Activated CD4-positive, alpha-beta T cell treated with anti-CD3 and anti-CD28 coated beads for 36 hours (primary cell): ENCODE measurements at regions of chr5 and their contacts with region 1.

Region 1: DNA sequence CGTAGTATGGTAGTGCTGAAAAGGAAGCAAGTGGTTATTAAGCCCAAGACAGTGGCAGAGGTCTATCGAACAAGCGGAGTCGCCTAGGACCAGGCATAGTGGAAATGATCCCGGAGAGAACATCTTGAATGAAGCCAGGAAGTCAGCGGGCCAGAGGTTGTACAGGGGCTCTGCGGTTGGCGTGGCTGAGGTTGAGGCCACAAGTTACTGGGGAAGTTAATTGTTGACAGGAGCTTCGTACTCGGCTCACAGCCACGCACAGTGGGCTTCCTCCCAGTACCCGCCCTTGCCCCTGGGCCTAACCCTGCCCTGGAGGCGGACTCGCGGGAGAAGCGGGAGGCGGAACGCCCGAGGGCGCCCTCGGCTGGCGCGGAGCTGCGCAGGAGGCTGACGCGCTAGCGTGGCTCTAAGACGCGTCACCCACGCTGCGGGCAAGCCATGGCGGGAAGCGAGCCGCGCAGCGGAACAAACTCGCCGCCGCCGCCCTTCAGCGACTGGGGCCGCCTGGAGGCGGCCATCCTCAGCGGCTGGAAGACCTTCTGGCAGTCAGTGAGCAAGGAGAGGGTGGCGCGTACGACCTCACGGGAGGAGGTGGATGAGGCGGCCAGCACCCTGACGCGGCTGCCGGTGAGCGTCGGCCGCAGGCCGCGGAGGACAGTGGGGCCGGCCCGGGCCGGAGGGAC is at the start of gene FBXO4:
- DNase-seq: peak; percentile 94
- ATAC-seq: peak; percentile 98
- H3K4me3 Mint-ChIP-seq: peak within 1 kb of the TSS; percentile 85
- H3K27ac Mint-ChIP-seq: peak within 1 kb of the TSS; percentile 99
- H3K4me1 Mint-ChIP-seq: peaks cover 24% of the 10 kb centered on the region
- H3K27me3 Mint-ChIP-seq: no peaks in the 10 kb centered on the region
- total RNA-seq, gene FBXO4: 18.8 to 22.3 TPM

Region 2: DNA sequence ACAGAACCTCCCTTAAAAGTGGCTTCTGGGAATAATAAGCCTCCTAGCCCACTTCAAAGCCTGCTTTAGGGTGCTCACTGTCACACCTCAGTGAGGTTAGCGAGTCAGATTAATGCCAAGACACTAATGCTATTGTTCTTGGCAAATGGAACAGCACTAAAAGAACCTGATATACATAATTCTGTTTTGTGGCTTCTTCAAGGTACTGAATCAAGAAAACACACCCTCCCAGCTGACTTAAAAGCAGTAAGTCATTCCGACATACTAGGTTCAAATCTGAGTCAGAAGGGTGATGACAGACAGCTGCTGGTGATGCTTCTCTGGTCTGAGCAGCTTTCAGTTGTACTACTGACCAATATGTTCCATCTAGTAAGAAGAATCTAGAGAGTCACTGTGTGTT is 176.4 kb before region 1 on chr5:
- CTCF ChIA-PET with region 1: no interaction called
- POLR2A ChIA-PET with region 1: no interaction called
- intact Hi-C with region 1: loop called in 1 of 2 experiments (anchors 5 kb)
- DNase-seq: peak; percentile 59
- ATAC-seq: peak; percentile 94
- H3K4me3 Mint-ChIP-seq: no peak overlapping the region
- H3K27ac Mint-ChIP-seq: no peak overlapping the region
- H3K4me1 Mint-ChIP-seq: peaks cover 28% of the 10 kb centered on the region
- H3K27me3 Mint-ChIP-seq: no peaks in the 10 kb centered on the region

Region 3: DNA sequence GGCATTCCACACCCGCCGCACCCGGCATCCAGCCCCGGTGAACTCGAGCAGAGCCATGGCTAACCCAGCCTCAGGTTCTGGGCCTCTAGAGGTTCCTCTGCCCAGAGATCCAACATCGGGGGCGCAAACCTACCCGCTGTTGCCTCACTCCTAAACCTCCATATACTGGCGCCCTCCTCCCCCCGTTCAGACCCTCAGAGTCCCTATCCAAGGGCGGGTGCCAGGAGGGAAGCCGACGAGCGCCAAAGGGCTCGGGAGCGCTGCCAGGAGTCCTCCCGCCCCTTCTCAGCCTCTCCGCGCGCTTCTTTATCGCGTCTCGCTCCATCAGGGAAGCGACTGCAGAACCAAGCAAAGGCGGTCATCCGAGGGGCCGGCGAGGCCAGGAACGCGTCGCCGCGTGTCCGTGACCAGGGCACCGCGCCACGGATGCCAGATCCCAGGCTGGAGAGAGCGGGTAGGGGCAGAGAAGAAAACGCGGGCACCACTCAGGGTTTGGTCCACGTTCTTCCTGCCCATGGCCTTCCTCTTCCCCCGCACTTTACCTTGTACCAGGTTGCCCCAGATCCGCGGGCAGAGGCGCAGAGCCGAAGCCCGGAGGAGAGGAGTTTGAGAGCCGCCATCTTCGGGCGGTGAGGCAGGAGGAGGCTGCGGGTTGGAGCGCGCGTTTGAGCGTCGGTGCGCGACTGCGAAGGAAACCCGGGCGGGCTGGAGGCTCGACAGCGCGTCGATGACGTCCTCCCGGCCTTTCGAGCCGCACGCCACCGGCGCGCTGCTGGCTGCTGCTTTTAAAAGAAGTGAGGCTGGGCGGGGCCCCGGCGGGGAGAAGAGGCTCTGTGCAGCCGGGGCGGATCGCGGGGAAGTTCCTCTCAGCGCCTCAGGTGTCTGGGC is 55.0 kb before region 1 on chr5 and contains the start of gene OXCT1:
- CTCF ChIA-PET with region 1: interaction called, 7 read pairs
- POLR2A ChIA-PET with region 1: interaction called, 3 read pairs
- intact Hi-C with region 1: loop called (anchors 1 kb)
- DNase-seq: peak; percentile 96
- ATAC-seq: peak; percentile 92
- H3K4me3 Mint-ChIP-seq: peak within 1 kb of the TSS; percentile 91
- H3K27ac Mint-ChIP-seq: peak within 1 kb of the TSS; percentile 94
- H3K4me1 Mint-ChIP-seq: peaks cover 54% of the 10 kb centered on the region
- H3K27me3 Mint-ChIP-seq: no peaks in the 10 kb centered on the region
- total RNA-seq, gene OXCT1: 70.3 to 91.4 TPM

Region 4: GRCh38 chr5:41903892-41904799 is 20.9 kb before region 1 on chr5 and contains the start of gene RIMOC1:
- CTCF ChIA-PET with region 1: interaction called, 7 read pairs
- POLR2A ChIA-PET with region 1: interaction called, 22 read pairs
- intact Hi-C with region 1: loop called (anchors 1 kb)
- DNase-seq: peak; percentile 98
- ATAC-seq: peak; percentile 97
- H3K4me3 Mint-ChIP-seq: peak within 1 kb of the TSS; percentile 91
- H3K27ac Mint-ChIP-seq: peak within 1 kb of the TSS; percentile 98
- H3K4me1 Mint-ChIP-seq: peaks cover 47% of the 10 kb centered on the region
- H3K27me3 Mint-ChIP-seq: no peaks in the 10 kb centered on the region
- total RNA-seq, gene RIMOC1: 25.4 to 26.7 TPM

Region 5: DNA sequence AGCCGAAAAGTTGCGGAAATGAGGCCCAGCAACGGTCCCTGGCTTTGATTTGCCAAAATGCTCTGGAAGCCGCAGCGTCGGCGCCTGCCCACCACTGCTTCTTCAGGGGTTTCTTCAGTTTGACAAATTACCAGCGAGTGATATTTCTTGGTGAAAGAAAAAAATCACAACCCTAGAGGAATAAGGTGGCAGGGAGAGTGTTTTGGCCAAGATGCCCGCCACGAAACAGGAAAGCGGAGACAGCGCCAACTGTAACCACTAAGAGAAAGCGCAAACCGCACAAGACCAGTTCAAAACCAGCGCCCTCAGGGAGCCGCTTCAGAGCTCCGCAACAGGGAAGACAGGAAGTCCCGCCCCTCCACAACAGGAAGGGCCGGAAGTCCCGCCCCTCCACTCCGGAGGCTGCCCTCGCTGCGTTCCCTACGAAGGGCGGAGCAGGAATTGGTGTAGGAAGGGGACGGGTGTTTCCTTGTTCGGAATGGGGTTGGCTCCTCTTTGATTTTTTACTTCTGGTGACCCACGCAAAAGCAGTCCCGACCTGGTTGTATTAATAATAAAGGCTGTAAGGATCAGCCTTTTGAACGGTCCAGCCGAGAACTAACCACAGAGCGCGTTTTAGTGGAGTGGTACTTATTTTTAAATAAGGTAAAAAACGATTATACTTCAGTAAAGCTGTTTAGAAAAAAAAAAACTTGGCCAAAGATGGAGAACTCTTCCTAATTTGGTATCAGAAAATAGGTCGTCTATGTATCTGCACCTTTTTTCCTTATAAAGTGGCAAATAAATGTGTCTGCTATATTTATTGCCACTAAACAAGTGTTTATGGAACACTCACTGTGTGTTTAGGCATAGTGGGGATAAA is 1590.0 kb after region 1 on chr5 and contains the start of gene C5orf34:
- CTCF ChIA-PET with region 1: no interaction called
- POLR2A ChIA-PET with region 1: no interaction called
- intact Hi-C with region 1: loop called in 1 of 2 experiments (anchors 10 kb)
- DNase-seq: peak; percentile 97
- ATAC-seq: peak; percentile 93
- H3K4me3 Mint-ChIP-seq: peak within 1 kb of the TSS; percentile 89
- H3K27ac Mint-ChIP-seq: peak within 1 kb of the TSS; percentile 99
- H3K4me1 Mint-ChIP-seq: peaks cover 23% of the 10 kb centered on the region
- H3K27me3 Mint-ChIP-seq: no peaks in the 10 kb centered on the region
- total RNA-seq, gene C5orf34: 14.4 to 16.8 TPM